ENCODE measurements at regions of chr13 and their contacts with region 1.

Region 1: GRCh38 chr13:71395053-71395452 is 472.0 kb downstream of the DACH1 start:
- DNase-seq: no peak
- H3K4me3 Mint-ChIP-seq: no peak overlapping the region
- H3K27ac Mint-ChIP-seq: no peak overlapping the region
- H3K4me1 Mint-ChIP-seq: no peaks in the 10 kb centered on the region
- H3K27me3 Mint-ChIP-seq: no peaks in the 10 kb centered on the region

Region 2: GRCh38 chr13:71714802-71715375 is 319.8 kb after region 1 on chr13:
- intact Hi-C with region 1: loop called (anchors 5 kb)
- DNase-seq: no peak
- H3K4me3 Mint-ChIP-seq: no peak overlapping the region
- H3K27ac Mint-ChIP-seq: no peak overlapping the region
- H3K4me1 Mint-ChIP-seq: no peaks in the 10 kb centered on the region
- H3K27me3 Mint-ChIP-seq: no peaks in the 10 kb centered on the region